Naive thymus-derived CD8-positive, alpha-beta T cell (primary cell): ENCODE measurements at regions of chr17 and their contacts with region 1.

Region 1: GRCh38 chr17:43085474-43085873 is 39.7 kb downstream of the BRCA1 start:
- DNase-seq: no peak
- ATAC-seq: no peak
- H3K4me3 Mint-ChIP-seq: no peak overlapping the region
- H3K27ac Mint-ChIP-seq: no peak overlapping the region
- H3K4me1 Mint-ChIP-seq: no peaks in the 10 kb centered on the region
- H3K27me3 Mint-ChIP-seq: no peaks in the 10 kb centered on the region

Region 2: GRCh38 chr17:43051969-43052368 is 33.5 kb before region 1 on chr17:
- POLR2A ChIA-PET with region 1: no interaction called
- DNase-seq: no peak
- ATAC-seq: no peak
- H3K4me3 Mint-ChIP-seq: no peak overlapping the region
- H3K27ac Mint-ChIP-seq: no peak overlapping the region
- H3K4me1 Mint-ChIP-seq: no peaks in the 10 kb centered on the region
- H3K27me3 Mint-ChIP-seq: no peaks in the 10 kb centered on the region

Region 3: GRCh38 chr17:43125133-43125966 is 39.9 kb after region 1 on chr17 and contains the start of gene BRCA1:
- POLR2A ChIA-PET with region 1: interaction called, 10 read pairs
- DNase-seq: peak; percentile 78 to 97 (median 92)
- ATAC-seq: peak; percentile 99
- H3K4me3 Mint-ChIP-seq: peak within 1 kb of the TSS; percentile 91 to 99 (median 97)
- H3K27ac Mint-ChIP-seq: peak within 1 kb of the TSS; percentile 89 to 98 (median 96)
- H3K4me1 Mint-ChIP-seq: peaks cover 16 to 37% (median 32%) of the 10 kb centered on the region in 4 donors
- H3K27me3 Mint-ChIP-seq: no peaks in the 10 kb centered on the region
- polyA plus RNA-seq, gene BRCA1: 0.35 to 1.8 (median 1.2) TPM

Region 4: DNA sequence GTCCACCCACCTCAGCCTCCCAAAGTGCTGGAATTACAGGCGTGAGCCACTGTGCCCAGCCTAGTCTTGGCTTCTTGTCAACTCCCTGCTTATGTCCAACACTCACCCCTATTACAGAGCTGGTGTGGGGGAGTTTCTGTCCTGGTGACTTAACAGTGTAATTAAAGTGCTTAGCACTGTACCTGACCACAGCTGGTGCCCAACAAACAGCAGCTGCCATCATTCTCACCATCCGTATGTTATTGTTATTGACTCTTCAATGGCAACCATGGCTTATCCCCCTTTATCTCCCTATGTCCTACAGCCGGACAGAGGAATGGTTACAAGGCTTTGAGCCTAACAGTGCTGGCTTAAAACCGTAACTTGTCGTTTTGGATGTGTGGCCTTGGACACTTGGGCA is 56.7 kb after region 1 on chr17:
- POLR2A ChIA-PET with region 1: no interaction called
- DNase-seq: no peak
- ATAC-seq: no peak
- H3K4me3 Mint-ChIP-seq: no peak overlapping the region
- H3K27ac Mint-ChIP-seq: no peak overlapping the region
- H3K4me1 Mint-ChIP-seq: peaks cover 0 to 2% (median 0%) of the 10 kb centered on the region in 4 donors
- H3K27me3 Mint-ChIP-seq: no peaks in the 10 kb centered on the region